Naive thymus-derived CD4-positive, alpha-beta T cell (primary cell): ENCODE measurements at regions of chr1 and their contacts with region 1.

Region 1: GRCh38 chr1:44354840-44355581 is at the start of gene ERI3:
- DNase-seq: peak; percentile 91 to 97 (median 95)
- ATAC-seq: peak; percentile 100
- H3K4me3 ChIP-seq: peak within 1 kb of the TSS; percentile 83
- H3K4me3 Mint-ChIP-seq: peak within 1 kb of the TSS; percentile 83 to 98 (median 96)
- H3K27ac ChIP-seq: peak within 1 kb of the TSS; percentile 82
- H3K27ac Mint-ChIP-seq: peak within 1 kb of the TSS; percentile 87 to 94 (median 90)
- H3K4me1 ChIP-seq: peaks cover 11 to 12% of the 10 kb centered on the region in 2 donors
- H3K4me1 Mint-ChIP-seq: peaks cover 15 to 52% (median 46%) of the 10 kb centered on the region in 7 donors
- H3K27me3 ChIP-seq: no peaks in the 10 kb centered on the region
- H3K27me3 Mint-ChIP-seq: no peaks in the 10 kb centered on the region
- total RNA-seq, gene ERI3: 28.7 to 37.7 (median 36.2) TPM

Region 2: DNA sequence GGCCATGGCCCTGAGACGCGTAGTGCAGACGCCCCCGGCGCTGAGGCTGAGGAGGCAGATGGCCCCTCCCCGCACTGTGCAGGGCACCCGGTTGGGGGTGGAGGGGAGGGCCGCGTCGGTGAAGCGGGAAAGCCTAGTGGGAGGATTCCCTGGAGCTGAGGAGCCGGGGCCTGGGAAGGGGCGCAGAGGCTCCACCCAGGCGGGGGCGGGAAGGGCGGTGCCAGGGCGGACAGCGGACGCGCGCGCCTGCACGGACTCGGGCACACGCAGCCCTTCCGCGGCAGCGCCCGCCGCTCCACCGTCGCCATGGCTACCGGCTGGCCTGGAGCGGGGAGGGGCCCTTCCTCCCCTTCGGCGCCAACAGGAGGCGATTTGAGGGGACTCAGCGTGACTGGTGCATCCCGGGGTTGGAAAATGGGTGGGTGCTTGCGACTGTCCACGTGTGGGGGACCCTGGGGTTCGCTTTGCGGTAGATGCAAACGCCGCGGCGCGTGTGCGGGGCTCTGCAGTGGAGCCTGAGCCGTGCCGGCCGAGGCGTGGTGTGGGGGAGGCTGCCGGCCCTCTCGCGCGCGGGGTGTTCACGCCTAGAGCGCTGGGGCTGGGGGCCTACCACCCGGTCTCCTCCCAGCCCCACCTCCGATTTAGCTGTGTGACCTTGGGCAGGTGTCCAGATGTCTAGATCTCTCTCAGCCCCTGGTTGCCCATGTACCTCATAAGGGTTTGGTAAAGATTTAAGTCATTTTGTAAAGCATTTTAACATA is 789.2 kb before region 1 on chr1:
- CTCF ChIA-PET with region 1: no interaction called
- POLR2A ChIA-PET with region 1: no interaction called
- intact Hi-C with region 1: no loop called
- DNase-seq: peak in 6 of 9 donors; percentile 14 to 78 (median 20)
- ATAC-seq: peak; percentile 76
- H3K4me3 ChIP-seq: peak overlapping the region; percentile 30
- H3K4me3 Mint-ChIP-seq: peak overlapping the region; percentile 56 to 80 (median 75)
- H3K27ac ChIP-seq: no peak overlapping the region
- H3K27ac Mint-ChIP-seq: no peak overlapping the region
- H3K4me1 ChIP-seq: no peaks in the 10 kb centered on the region
- H3K4me1 Mint-ChIP-seq: peaks cover 0 to 12% (median 4%) of the 10 kb centered on the region in 7 donors
- H3K27me3 ChIP-seq: no peaks in the 10 kb centered on the region
- H3K27me3 Mint-ChIP-seq: peaks cover 0 to 12% (median 8%) of the 10 kb centered on the region in 5 donors

Region 3: GRCh38 chr1:44029906-44030604 is 325.0 kb before region 1 on chr1:
- CTCF ChIA-PET with region 1: no interaction called
- POLR2A ChIA-PET with region 1: no interaction called
- intact Hi-C with region 1: loop called in 1 of 2 experiments (anchors 10 kb)
- DNase-seq: peak; percentile 73 to 90 (median 85)
- ATAC-seq: peak; percentile 90
- H3K4me3 ChIP-seq: peak overlapping the region; percentile 61
- H3K4me3 Mint-ChIP-seq: peak overlapping the region; percentile 94 to 99 (median 97)
- H3K27ac ChIP-seq: peak overlapping the region; percentile 78
- H3K27ac Mint-ChIP-seq: peak overlapping the region; percentile 92 to 98 (median 94)
- H3K4me1 ChIP-seq: peaks cover 0 to 7% of the 10 kb centered on the region in 2 donors
- H3K4me1 Mint-ChIP-seq: peaks cover 16 to 40% (median 23%) of the 10 kb centered on the region in 7 donors
- H3K27me3 ChIP-seq: no peaks in the 10 kb centered on the region
- H3K27me3 Mint-ChIP-seq: no peaks in the 10 kb centered on the region

Region 4: DNA sequence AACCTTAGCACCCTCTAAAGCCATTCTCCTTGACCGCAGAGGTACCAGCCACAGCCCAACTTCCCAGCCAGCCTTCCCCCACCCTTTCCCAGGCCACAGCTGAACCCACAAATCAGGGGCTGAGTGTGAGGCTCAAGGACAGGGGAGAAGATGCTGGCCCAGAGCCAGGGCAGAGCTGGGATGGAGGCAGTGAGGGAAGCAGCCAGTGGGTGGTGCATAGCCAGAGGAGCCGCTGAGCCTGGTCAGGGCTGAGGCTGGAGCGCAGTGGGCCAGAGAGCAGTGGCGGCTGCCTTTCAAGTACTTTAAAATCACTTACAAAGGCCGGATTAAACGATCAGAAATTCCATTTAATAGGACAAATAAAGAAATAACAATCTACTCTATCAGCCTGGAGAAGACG is 105.5 kb before region 1 on chr1:
- CTCF ChIA-PET with region 1: no interaction called
- POLR2A ChIA-PET with region 1: no interaction called
- intact Hi-C with region 1: no loop called
- DNase-seq: no peak
- ATAC-seq: no peak
- H3K4me3 ChIP-seq: no peak overlapping the region
- H3K4me3 Mint-ChIP-seq: no peak overlapping the region
- H3K27ac ChIP-seq: no peak overlapping the region
- H3K27ac Mint-ChIP-seq: no peak overlapping the region
- H3K4me1 ChIP-seq: no peaks in the 10 kb centered on the region
- H3K4me1 Mint-ChIP-seq: peaks cover 0 to 3% (median 0%) of the 10 kb centered on the region in 7 donors
- H3K27me3 ChIP-seq: no peaks in the 10 kb centered on the region
- H3K27me3 Mint-ChIP-seq: no peaks in the 10 kb centered on the region

Region 5: GRCh38 chr1:44405041-44405797 is 50.2 kb after region 1 on chr1 and contains the start of gene RNF220:
- CTCF ChIA-PET with region 1: no interaction called
- POLR2A ChIA-PET with region 1: no interaction called
- intact Hi-C with region 1: loop called in 1 of 2 experiments (anchors 1 kb)
- DNase-seq: peak in 6 of 9 donors; percentile 32 to 45 (median 34)
- ATAC-seq: peak; percentile 66
- H3K4me3 ChIP-seq: peak within 1 kb of the TSS; percentile 66
- H3K4me3 Mint-ChIP-seq: peak within 1 kb of the TSS; percentile 80 to 95 (median 89)
- H3K27ac ChIP-seq: no peak within 1 kb of the TSS
- H3K27ac Mint-ChIP-seq: peak within 1 kb of the TSS in 4 of 9 donors; percentile 0 to 45 (median 6)
- H3K4me1 ChIP-seq: peaks cover 10 to 33% of the 10 kb centered on the region in 2 donors
- H3K4me1 Mint-ChIP-seq: peaks cover 17 to 38% (median 29%) of the 10 kb centered on the region in 7 donors
- H3K27me3 ChIP-seq: peaks cover 20 to 58% of the 10 kb centered on the region in 2 donors
- H3K27me3 Mint-ChIP-seq: peaks cover 43 to 66% (median 51%) of the 10 kb centered on the region in 5 donors
- total RNA-seq, gene RNF220: 84.0 to 127 (median 95.9) TPM

Region 6: GRCh38 chr1:44631647-44632539 is 276.9 kb after region 1 on chr1:
- CTCF ChIA-PET with region 1: no interaction called
- POLR2A ChIA-PET with region 1: interaction called, 5 read pairs
- intact Hi-C with region 1: loop called (anchors 1 kb)
- DNase-seq: peak; percentile 80 to 92 (median 87)
- ATAC-seq: peak; percentile 87
- H3K4me3 ChIP-seq: peak overlapping the region; percentile 70
- H3K4me3 Mint-ChIP-seq: peak overlapping the region; percentile 69 to 95 (median 90)
- H3K27ac ChIP-seq: peak overlapping the region; percentile 85
- H3K27ac Mint-ChIP-seq: peak overlapping the region; percentile 46 to 99 (median 97)
- H3K4me1 ChIP-seq: peaks cover 8 to 13% of the 10 kb centered on the region in 2 donors
- H3K4me1 Mint-ChIP-seq: peaks cover 26 to 50% (median 39%) of the 10 kb centered on the region in 7 donors
- H3K27me3 ChIP-seq: no peaks in the 10 kb centered on the region
- H3K27me3 Mint-ChIP-seq: no peaks in the 10 kb centered on the region

Region 7: GRCh38 chr1:44739361-44740178 is 384.6 kb after region 1 on chr1 and contains the start of gene KIF2C:
- CTCF ChIA-PET with region 1: no interaction called
- POLR2A ChIA-PET with region 1: no interaction called
- intact Hi-C with region 1: loop called in 1 of 2 experiments (anchors 5 kb)
- DNase-seq: peak; percentile 87 to 96 (median 94)
- ATAC-seq: peak; percentile 100
- H3K4me3 ChIP-seq: peak within 1 kb of the TSS; percentile 79
- H3K4me3 Mint-ChIP-seq: peak within 1 kb of the TSS; percentile 84 to 99 (median 94)
- H3K27ac ChIP-seq: peak within 1 kb of the TSS; percentile 84
- H3K27ac Mint-ChIP-seq: peak within 1 kb of the TSS; percentile 86 to 97 (median 95)
- H3K4me1 ChIP-seq: peaks cover 5 to 7% of the 10 kb centered on the region in 2 donors
- H3K4me1 Mint-ChIP-seq: peaks cover 9 to 39% (median 19%) of the 10 kb centered on the region in 7 donors
- H3K27me3 ChIP-seq: no peaks in the 10 kb centered on the region
- H3K27me3 Mint-ChIP-seq: no peaks in the 10 kb centered on the region
- total RNA-seq, gene KIF2C: 0.32 to 69.3 (median 1.1) TPM